Common myeloid progenitor, CD34-positive (primary cell): ENCODE measurements at regions of chr1 and their contacts with region 1.

Region 1: DNA sequence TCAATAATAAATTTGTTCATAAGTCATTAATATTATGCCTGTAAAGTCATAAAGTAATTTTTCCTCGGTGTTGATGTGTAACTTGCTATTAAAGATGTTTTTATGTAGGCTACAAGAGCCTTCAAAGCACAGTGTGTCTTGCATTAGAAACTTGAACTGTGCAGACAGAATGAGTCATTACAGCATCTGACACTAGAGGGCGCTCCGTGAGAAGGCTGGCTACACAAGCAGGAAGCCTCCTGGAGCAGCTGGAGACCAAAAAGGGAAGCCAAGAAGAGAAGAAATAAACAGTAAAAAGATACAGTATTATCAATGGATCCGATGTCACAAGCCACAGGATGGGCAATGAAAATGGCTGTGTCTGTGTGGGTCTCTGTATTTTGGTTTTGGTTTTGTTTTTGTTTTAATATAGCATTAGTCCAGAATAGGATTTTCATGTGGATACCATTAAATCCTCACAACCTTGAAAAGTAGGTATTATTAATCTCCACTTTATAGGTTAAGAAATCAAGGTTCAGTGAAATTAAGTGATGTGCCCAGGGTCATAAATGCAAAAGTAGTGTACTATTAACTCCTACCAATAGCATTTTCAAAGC is 16.1 kb upstream of the LRRC8D start:
- DNase-seq: peak; percentile 91 to 98 (median 96)
- H3K4me3 ChIP-seq: peak overlapping the region in 2 of 7 experiments; percentile 16 to 37
- H3K27ac ChIP-seq: no peak overlapping the region
- H3K4me1 ChIP-seq: peaks cover 5 to 31% (median 16%) of the 10 kb centered on the region in 4 experiments
- H3K27me3 ChIP-seq: no peaks in the 10 kb centered on the region

Region 2: DNA sequence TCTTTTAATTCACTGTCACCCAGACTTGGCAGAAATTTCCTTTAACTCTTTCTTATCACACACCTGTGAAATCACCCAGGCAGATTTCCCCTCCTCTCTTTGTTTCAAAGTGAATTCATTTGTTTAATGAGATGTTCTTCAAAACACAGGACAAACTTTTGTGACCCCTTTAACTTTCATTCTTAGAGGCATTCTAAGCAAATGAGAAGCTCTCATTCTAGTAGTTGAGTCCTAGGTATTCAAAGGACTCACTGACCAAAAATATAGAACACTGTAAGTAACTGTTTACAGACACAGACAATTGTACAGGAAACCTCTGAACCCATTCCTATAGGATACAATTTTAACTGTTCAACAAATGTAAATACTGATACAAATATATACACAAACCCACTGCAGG is 155.0 kb before region 1 on chr1:
- CTCF ChIA-PET with region 1: no interaction called
- POLR2A ChIA-PET with region 1: no interaction called
- DNase-seq: no peak
- H3K4me3 ChIP-seq: no peak overlapping the region
- H3K27ac ChIP-seq: no peak overlapping the region
- H3K4me1 ChIP-seq: no peaks in the 10 kb centered on the region
- H3K27me3 ChIP-seq: no peaks in the 10 kb centered on the region

Region 3: GRCh38 chr1:89739013-89739843 is 65.5 kb before region 1 on chr1:
- CTCF ChIA-PET with region 1: no interaction called
- POLR2A ChIA-PET with region 1: no interaction called
- DNase-seq: no peak
- H3K4me3 ChIP-seq: no peak overlapping the region
- H3K27ac ChIP-seq: peak overlapping the region in 1 of 2 experiments; percentile 15
- H3K4me1 ChIP-seq: peaks cover 0 to 2% (median 0%) of the 10 kb centered on the region in 4 experiments
- H3K27me3 ChIP-seq: no peaks in the 10 kb centered on the region

Region 4: DNA sequence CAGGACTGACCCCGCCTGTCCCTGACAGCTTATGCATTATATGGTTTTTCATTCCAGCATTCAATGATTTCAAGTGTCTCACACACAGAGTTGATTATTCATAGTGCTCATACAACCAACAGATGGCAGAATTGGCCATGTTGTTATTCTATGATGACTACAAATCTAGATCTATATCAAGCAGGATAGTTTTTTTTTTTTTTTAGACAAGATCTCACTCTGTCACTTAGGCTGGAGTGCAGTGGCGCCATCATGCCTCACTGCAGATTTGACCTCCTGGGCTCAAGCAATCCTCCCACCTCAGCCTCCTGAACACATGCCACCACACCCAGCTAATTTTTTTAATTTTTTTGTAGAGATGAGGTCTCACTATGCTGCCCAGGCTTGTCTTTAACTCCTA is 24.0 kb before region 1 on chr1:
- CTCF ChIA-PET with region 1: interaction called, 16 read pairs
- POLR2A ChIA-PET with region 1: no interaction called
- DNase-seq: peak; percentile 68 to 83 (median 83)
- H3K4me3 ChIP-seq: no peak overlapping the region
- H3K27ac ChIP-seq: no peak overlapping the region
- H3K4me1 ChIP-seq: peaks cover 0 to 10% (median 5%) of the 10 kb centered on the region in 4 experiments
- H3K27me3 ChIP-seq: no peaks in the 10 kb centered on the region

Region 5: DNA sequence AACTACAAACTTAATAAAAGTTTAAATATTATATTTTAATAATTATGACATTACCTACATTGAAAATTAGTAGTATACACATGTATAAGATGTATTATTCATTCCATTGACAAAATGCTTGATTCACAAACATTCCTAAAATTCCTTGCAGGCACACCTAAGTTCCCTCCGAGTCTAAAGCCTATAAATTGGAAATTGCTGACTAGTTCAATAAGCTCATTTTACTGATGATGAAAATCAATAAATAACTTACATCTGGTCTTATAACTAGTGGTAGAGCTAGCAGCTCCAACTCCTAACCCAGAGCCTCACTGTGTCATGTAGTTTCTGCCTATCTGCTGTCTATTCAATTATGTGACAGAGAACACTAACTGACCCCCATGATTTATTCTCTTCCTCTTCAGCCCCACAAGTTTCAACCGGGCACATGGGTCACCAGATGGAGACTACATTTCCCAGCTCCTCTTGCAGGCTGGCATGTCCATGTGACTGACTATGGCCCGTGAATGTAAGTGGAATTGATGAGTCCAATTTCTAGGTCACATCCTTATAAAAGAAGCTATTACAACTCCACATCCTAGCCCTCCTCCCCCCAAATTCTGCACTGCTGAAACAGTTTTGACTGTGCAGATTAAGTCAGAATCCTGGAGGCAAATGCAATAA is 13.5 kb before region 1 on chr1:
- CTCF ChIA-PET with region 1: interaction called, 23 read pairs
- POLR2A ChIA-PET with region 1: no interaction called
- DNase-seq: no peak
- H3K4me3 ChIP-seq: no peak overlapping the region
- H3K27ac ChIP-seq: no peak overlapping the region
- H3K4me1 ChIP-seq: peaks cover 0 to 3% (median 0%) of the 10 kb centered on the region in 4 experiments
- H3K27me3 ChIP-seq: no peaks in the 10 kb centered on the region

Region 6: GRCh38 chr1:89820422-89821321 is 15.9 kb after region 1 on chr1 and contains the start of gene LRRC8D:
- CTCF ChIA-PET with region 1: interaction called, 14 read pairs
- POLR2A ChIA-PET with region 1: interaction called, 7 read pairs
- DNase-seq: peak; percentile 74 to 89 (median 83)
- H3K4me3 ChIP-seq: peak within 1 kb of the TSS; percentile 48 to 86 (median 78)
- H3K27ac ChIP-seq: peak within 1 kb of the TSS; percentile 28 to 89
- H3K4me1 ChIP-seq: peaks cover 26 to 50% (median 37%) of the 10 kb centered on the region in 4 experiments
- H3K27me3 ChIP-seq: no peaks in the 10 kb centered on the region

Region 7: GRCh38 chr1:89910780-89911179 is 106.0 kb after region 1 on chr1:
- CTCF ChIA-PET with region 1: no interaction called
- POLR2A ChIA-PET with region 1: no interaction called
- DNase-seq: no peak
- H3K4me3 ChIP-seq: no peak overlapping the region
- H3K27ac ChIP-seq: peak overlapping the region in 1 of 2 experiments; percentile 46
- H3K4me1 ChIP-seq: peaks cover 28 to 77% (median 57%) of the 10 kb centered on the region in 4 experiments
- H3K27me3 ChIP-seq: no peaks in the 10 kb centered on the region

Region 8: DNA sequence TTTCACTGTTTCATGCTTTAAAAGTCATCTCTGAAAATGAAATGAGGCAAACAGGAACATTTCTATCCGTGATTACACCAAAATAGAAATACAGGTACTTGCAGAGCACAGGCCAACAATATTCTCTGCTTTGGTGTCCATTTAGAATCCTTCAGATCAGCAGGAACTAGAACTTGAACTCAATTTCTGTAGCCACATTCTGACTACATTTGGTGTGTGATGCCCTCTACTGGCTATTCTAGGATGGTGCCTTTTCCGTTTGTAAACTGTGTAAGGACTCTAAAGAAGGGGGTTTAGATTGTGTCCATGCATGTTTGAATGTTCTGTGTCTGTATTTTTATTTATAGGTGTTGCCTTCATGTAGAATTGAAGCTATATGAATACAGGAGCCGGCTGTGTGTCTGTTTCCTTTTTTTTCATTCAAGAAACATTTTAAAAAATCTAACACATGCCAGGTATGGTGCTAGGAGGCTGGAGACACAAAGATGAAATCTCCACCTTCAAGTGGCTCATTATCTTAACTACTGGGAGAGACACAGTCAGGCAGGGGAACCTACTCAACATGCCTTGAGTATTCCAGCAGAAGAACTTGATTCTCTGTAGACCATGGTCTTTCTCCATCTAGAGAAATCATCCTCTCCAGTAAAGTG is 182.6 kb after region 1 on chr1:
- CTCF ChIA-PET with region 1: interaction called, 19 read pairs
- POLR2A ChIA-PET with region 1: no interaction called
- DNase-seq: peak; percentile 77 to 89 (median 84)
- H3K4me3 ChIP-seq: no peak overlapping the region
- H3K27ac ChIP-seq: no peak overlapping the region
- H3K4me1 ChIP-seq: peaks cover 0 to 4% (median 0%) of the 10 kb centered on the region in 4 experiments
- H3K27me3 ChIP-seq: no peaks in the 10 kb centered on the region